ENCODE measurements at regions of chr19 and their contacts with region 1.

Region 1: DNA sequence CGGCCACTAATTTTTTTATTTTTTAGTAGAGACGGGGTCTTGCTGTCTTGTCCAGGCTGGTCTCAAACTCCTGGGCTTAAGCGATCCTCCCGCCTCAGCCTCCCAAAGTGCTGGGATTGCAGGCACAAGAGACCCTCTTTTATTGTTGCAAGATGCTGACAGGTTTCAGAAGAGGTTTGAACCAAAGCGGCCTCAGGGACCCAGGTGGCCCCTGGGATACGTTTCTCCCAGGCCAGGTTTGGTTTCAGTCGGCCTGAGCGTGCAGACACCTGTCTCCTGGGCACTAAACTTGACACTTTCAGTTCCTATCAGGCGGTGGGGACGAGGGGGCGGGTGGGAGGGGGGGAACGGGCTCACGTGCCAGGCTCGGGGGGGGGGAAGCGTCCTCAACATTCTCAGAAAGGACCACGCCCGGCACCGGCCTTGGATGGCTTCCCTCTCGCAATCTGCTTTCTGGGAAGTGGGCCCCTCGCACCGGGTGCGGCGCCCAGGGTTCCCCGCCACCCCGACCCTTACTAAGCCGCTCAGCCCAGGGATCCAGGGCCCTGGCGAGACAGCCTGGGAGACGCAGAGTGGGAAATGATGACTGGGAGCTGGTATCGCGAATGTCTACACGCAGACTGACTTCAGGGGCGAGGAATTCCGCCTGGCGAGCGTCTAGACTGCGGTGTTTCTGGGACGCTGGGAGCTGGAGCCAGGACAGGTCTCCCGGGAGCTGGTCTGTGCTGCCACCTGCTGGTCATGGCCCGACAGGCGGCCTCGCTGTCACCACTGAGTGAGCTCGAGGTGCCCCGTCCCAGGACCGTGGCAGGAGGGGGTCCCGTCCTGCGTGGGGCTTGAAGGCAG is 91.6 kb downstream of the GNG7 start:
- DNase-seq: peak; percentile 91
- ATAC-seq: peak; percentile 86
- H3K4me3 Mint-ChIP-seq: peak overlapping the region; percentile 77
- H3K27ac Mint-ChIP-seq: no peak overlapping the region
- H3K4me1 Mint-ChIP-seq: peaks cover 47% of the 10 kb centered on the region
- H3K27me3 Mint-ChIP-seq: peaks cover 33% of the 10 kb centered on the region

Region 2: DNA sequence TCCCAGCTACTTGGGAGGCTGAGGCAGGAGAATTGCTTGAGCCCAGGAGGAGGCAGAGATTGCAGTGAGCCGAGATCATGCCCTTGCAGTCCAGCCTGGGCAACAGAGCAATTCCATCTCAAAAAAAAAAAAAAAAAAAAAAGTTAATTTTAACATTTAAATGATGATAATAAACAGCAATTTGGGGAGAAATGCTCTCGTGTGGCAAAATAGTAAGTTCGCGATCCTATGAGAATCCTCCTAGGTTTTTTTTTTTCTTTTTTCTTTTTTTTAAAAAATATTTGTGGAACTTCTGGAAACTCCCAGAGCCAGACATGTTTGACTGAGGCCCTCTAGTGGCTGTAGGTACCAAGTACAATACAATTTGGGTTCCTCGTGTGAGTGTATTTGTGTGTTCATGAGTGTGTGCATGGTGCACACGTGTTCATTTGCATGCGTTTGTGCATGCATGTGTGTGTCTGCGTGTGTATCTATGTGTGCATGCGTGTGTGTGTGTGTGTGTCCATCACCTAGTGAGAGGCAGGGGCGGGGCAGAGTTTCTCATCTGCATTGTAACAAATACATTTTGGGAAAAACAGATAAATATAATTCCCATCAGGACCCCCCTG is 219.6 kb before region 1 on chr19:
- CTCF ChIA-PET with region 1: interaction called, 14 read pairs
- DNase-seq: peak; percentile 51
- ATAC-seq: peak; percentile 42
- H3K4me3 Mint-ChIP-seq: no peak overlapping the region
- H3K27ac Mint-ChIP-seq: no peak overlapping the region
- H3K4me1 Mint-ChIP-seq: peaks cover 19% of the 10 kb centered on the region
- H3K27me3 Mint-ChIP-seq: peaks cover 21% of the 10 kb centered on the region

Region 3: DNA sequence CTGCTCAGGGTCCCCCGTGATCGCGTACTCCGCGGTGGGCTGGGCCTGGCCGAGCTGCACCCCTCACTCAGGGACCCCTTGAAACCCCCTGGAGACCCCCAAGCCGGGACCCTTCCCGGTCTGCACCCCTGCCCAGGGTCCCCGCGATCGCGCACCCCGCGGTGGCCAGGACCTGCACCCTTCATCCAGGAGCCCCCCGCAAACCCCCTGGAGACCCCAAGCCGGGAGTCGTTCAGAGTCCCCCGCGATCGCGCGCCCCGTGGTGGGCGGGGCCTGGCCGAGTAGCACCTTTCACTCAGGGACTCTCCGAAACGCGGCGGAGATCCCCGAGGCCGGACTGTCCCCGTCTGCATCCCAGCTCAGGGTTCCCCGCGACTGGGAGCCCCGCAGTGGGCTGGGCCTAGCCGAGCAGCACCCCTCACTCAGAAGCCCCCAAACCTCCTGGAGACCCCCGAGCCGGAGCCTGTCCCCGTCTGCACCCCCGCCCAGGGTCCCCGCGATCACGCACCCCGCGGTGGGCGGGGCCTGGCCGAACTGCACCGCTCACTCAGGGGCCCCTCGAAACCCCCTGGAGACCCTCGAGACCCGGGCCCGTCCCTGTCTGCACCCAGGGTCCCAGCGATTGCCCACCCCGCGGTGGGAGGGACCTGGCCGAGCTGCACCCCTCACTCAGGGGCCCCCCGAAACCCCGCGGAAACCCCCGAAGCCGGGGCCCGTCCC is 154.8 kb before region 1 on chr19:
- CTCF ChIA-PET with region 1: interaction called, 28 read pairs
- DNase-seq: peak; percentile 71
- ATAC-seq: peak; percentile 49
- H3K4me3 Mint-ChIP-seq: peak overlapping the region; percentile 84
- H3K27ac Mint-ChIP-seq: peak overlapping the region; percentile 91
- H3K4me1 Mint-ChIP-seq: peaks cover 27% of the 10 kb centered on the region
- H3K27me3 Mint-ChIP-seq: no peaks in the 10 kb centered on the region

Region 4: DNA sequence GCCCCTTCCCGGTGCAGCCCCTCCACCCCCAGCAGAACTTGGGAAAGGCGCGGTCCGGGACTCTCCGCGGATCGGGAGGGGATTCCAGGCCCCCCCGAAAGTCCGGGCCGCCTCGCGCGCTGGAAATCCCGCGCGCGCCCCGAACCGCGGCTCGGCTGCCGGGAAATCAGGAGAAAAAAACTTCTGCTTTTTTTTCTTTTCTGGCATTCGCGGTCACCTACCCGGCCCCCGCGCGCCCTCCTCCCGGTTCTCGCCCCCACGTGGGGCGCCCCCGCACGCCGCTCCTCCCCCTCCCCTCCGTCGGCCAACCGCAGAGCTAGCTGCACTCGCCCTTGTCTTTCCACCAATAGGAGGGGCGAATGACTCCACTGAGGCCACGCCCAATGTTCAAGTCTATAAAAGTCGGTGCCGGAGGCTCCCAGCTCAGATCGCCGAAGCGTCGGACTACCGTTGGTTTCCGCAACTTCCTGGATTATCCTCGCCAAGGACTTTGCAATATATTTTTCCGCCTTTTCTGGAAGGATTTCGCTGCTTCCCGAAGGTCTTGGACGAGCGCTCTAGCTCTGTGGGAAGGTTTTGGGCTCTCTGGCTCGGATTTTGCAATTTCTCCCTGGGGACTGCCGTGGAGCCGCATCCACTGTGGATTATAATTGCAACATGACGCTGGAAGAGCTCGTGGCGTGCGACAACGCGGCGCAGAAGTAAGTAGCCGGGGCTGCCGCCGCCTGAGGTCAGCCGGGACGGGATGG is 135.0 kb before region 1 on chr19 and contains the start of gene GADD45B:
- CTCF ChIA-PET with region 1: interaction called, 257 read pairs
- DNase-seq: peak; percentile 97
- ATAC-seq: peak; percentile 57
- H3K4me3 Mint-ChIP-seq: peak within 1 kb of the TSS; percentile 100
- H3K27ac Mint-ChIP-seq: peak within 1 kb of the TSS; percentile 91
- H3K4me1 Mint-ChIP-seq: peaks cover 21% of the 10 kb centered on the region
- H3K27me3 Mint-ChIP-seq: peaks cover 3% of the 10 kb centered on the region
- total RNA-seq, gene GADD45B: 63.4 to 79.4 TPM

Region 5: DNA sequence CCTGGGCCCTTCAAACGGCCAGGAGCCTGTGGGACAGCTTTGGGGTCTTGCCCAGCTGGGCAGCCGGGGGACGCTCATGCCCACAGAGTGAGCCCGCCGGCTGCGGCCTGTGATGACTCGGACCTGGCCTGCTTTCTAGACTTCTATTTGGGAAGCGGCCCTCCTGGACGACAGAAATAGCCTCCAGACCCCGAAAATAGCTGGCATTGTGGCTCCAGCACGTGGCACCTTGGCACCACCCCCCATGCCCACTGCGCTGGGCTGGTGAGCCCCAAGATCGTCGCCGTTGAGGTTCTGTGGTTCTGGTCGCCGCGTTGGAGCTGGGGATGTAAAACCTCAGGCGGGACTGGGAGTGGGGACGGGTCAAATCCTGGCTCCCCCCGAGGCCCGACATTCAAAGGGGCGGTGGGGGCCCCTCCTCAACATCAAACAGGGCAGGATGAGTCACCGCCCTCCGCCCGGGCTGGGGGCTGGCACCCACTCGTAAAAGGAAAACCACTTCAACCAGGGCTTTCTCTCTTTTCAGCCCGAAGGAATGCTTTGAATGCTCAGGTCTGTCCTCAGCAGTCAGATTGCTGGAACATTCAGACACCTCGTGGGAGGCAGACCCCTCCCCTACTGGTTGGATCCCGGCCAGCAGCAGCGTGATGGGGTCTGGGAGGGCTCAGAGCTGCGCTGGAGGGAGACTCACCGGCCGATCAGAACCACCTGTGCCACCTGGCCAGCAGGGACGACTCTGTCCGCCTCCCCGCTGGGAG is 92.8 kb before region 1 on chr19:
- CTCF ChIA-PET with region 1: no interaction called
- DNase-seq: no peak
- ATAC-seq: no peak
- H3K4me3 Mint-ChIP-seq: no peak overlapping the region
- H3K27ac Mint-ChIP-seq: no peak overlapping the region
- H3K4me1 Mint-ChIP-seq: no peaks in the 10 kb centered on the region
- H3K27me3 Mint-ChIP-seq: peaks cover 9% of the 10 kb centered on the region

Region 6: DNA sequence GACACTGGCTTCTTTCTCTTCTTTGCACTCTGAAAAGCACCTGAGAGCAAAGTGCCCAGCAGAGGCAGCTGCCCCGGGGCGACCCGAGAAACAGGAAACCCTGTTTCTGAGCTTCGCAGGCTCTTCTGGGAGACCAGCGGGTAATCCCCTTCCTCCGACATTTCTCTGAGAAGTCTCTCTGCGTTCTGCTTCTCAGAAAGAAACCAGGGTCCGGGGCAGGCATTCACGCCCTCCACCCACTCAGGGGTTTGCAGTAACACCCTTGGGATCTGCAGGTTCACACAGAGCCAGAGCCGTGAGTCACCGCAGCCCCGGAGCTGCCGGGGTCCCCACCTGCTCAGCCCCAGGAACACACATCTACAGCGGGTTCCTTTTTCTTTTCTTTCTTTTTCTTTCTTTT is 49.0 kb before region 1 on chr19:
- CTCF ChIA-PET with region 1: interaction called, 11 read pairs
- DNase-seq: peak; percentile 86
- ATAC-seq: peak; percentile 89
- H3K4me3 Mint-ChIP-seq: peak overlapping the region; percentile 82
- H3K27ac Mint-ChIP-seq: peak overlapping the region; percentile 99
- H3K4me1 Mint-ChIP-seq: peaks cover 49% of the 10 kb centered on the region
- H3K27me3 Mint-ChIP-seq: no peaks in the 10 kb centered on the region

Region 7: DNA sequence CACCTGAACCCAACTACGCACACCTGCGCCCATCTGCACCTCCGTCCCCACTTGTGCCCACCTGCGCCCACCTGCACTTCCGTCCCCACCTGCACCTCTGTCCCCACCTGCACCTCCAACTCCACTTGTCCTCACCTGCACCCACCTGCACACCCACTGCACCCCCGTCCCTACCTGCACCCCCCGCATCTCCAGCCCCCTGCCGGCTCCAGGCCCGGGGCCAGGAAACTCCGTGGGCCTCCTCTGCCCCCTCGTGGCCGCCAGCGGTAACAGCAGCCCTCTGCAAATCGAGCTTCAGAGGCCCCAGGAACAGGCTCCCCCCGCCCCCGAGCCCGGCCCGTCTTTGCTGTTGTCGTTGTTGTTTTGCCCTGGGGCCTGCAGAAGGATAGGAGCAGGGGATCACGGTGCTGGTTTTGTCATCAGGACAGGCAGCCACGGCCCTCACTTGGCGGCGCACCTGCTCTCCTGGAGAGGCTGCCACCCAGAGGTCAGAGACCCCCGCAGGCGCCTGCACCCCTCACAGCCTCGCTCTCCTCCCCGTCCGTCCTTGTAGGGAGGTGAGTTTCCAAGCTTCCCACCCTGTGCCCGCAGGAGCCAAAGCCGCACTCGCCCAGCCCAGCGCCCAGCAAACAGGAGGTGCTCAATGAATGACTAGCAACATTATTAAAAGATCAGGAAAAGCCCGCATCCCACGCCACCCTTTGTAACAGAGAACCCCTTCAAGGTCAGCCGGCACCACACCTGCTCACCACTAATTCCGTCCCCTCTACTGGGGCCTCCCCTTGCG is 26.2 kb after region 1 on chr19:
- CTCF ChIA-PET with region 1: interaction called, 434 read pairs
- DNase-seq: peak; percentile 80
- ATAC-seq: peak; percentile 84
- H3K4me3 Mint-ChIP-seq: no peak overlapping the region
- H3K27ac Mint-ChIP-seq: no peak overlapping the region
- H3K4me1 Mint-ChIP-seq: no peaks in the 10 kb centered on the region
- H3K27me3 Mint-ChIP-seq: peaks cover 8% of the 10 kb centered on the region